Esophagus muscularis mucosa (tissue), 4 donors: ENCODE measurements at regions of chr5 and their contacts with region 1.

Region 1: DNA sequence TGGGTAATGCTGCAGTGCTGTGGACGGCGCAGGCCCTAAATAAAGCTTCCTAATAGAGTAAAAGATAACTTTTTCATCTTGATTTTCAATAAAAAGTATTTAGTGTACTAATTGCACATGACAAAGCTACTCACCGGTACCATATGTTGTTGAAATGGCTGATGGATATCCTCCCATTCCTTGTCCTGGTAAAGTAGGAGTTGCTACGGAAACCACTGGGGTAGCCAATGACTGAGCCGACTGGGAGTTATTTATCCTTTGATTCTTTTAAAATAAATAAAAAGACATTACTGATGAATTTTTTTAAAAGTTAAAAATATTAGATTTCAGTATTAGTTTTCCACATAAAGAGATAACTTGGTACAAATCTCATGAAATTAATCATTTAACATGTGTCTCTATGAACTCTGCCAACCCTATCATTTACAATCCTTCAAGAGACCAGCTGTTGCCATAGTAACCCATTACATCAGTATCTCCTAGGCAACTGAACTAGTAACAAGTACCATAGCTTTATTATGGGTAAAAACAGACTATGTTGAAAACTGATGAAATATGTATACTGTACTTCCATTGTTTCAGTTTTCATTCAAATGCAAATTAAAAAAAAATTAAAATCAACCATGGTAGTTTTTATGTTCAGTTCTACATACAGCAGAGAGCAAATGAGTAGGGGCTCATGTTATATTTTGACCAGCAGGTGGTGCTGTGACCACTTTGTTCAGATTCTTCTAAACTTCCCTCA is 153.7 kb downstream of the MEF2C start:
- DNase-seq: no peak
- H3K4me3 ChIP-seq: no peak overlapping the region
- H3K27ac ChIP-seq: no peak overlapping the region
- H3K4me1 ChIP-seq: peaks cover 0 to 17% (median 8%) of the 10 kb centered on the region in 4 donors
- H3K27me3 ChIP-seq: no peaks in the 10 kb centered on the region
- CTCF ChIP-seq: peak; percentile 69 to 83 (median 82)
- EP300 ChIP-seq: no peak
- POLR2A ChIP-seq: no peak

Region 2: DNA sequence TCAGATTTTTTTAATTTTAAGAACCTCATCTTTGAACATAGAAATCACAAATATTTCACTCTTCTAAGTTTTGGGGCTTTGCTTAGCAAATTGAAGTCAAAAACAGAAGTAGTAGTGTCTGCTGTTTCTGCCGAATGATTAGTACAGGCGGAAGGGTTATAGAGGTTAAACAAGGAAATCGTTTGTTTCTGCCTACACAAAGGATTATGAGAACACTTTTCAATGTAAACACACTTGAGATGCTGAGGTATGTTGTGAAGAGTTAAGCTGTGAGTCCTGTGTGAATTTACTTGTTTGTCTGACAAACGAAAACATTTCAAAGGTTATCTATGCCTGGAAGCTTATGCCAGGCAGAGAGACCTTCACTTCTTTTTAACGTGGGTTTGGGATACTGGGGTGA is 1455.5 kb after region 1 on chr5:
- intact Hi-C with region 1: loop called (anchors 10 kb)
- DNase-seq: no peak
- H3K4me3 ChIP-seq: no peak overlapping the region
- H3K27ac ChIP-seq: no peak overlapping the region
- H3K4me1 ChIP-seq: peaks cover 0 to 9% (median 0%) of the 10 kb centered on the region in 4 donors
- H3K27me3 ChIP-seq: no peaks in the 10 kb centered on the region
- CTCF ChIP-seq: no peak
- EP300 ChIP-seq: no peak
- POLR2A ChIP-seq: no peak

Region 3: GRCh38 chr5:90264689-90265544 is 1535.7 kb after region 1 on chr5:
- intact Hi-C with region 1: loop called (anchors 5 kb)
- DNase-seq: no peak
- H3K4me3 ChIP-seq: no peak overlapping the region
- H3K27ac ChIP-seq: no peak overlapping the region
- H3K4me1 ChIP-seq: peaks cover 0 to 5% (median 2%) of the 10 kb centered on the region in 4 donors
- H3K27me3 ChIP-seq: no peaks in the 10 kb centered on the region
- CTCF ChIP-seq: peak; percentile 74 to 98 (median 86)
- EP300 ChIP-seq: no peak
- POLR2A ChIP-seq: no peak